ENCODE measurements at regions of chr10 and their contacts with region 1.

Region 1: DNA sequence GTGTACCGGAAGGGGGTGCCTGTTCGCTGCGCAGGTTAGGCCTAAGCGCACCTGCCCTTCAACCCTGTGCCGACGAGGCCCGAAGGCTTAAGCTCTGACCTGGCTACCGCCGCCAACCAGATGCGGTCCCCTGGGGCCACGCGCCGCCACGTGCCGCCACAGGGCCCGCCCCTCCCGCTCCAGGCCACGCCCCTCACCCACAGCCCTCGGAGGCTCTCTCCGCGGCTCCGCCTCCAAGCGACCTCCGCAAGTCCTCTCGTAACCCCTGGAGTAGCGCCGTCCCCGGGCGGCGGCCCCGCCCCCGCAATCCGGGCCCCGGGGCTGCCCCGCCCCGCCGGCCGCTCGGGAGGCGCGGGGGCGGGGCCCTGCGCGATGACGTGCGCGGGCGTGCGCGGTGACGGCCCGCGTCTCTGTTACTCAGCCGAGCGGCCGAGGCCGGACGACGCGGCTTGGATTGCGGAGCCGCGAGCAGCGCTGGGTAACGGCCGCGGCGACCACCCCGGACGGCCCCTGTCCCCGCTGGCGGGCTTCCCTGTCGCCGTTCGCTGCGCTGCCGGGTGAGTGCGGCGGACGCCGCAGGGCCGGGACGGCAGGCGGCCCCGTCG is at the start of gene MAPK8:
- DNase-seq: peak; percentile 92
- H3K4me3 Mint-ChIP-seq: peak within 1 kb of the TSS; percentile 84
- H3K27ac Mint-ChIP-seq: peak within 1 kb of the TSS; percentile 58
- H3K4me1 Mint-ChIP-seq: peaks cover 34% of the 10 kb centered on the region
- H3K27me3 Mint-ChIP-seq: no peaks in the 10 kb centered on the region
- total RNA-seq, gene MAPK8: 44.2 to 45.4 TPM

Region 2: DNA sequence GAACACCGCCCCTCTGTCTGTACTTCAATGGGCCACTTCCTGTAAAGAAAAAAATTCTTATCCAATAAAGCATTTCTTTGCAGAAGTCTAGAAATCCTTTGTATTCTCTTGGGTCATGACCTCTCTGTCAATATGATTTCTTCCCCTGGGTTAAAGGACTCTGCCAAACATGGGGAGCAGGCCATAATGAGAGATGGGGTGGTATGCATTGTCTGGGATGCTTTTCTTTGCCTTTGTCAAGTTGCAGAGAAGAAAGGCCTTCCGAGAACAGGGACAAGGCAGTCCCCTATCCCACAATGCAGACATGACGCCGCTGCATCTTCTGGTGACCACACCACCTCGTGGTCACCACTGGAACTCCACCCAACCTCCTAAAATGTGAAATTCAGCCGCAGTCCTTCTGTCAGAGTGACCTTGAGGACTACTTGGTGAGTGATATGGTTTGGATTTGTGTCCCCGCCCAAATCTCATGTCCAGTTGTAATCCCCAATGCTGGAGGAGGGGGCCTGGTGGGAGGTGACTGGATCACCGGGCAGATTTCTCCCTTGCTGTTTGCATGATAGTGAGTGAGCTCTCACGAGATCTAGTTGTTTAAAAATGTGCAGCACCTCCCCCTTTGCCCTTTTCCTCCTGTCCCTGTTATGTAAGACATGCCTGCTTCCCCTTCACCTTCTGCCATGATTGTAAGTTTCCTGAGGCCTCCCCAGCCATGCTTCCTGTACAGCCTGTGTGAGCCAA is 16.7 kb before region 1 on chr10:
- CTCF ChIA-PET with region 1: interaction called, 15 read pairs
- POLR2A ChIA-PET with region 1: no interaction called
- intact Hi-C with region 1: no loop called
- DNase-seq: peak; percentile 60
- H3K4me3 Mint-ChIP-seq: no peak overlapping the region
- H3K27ac Mint-ChIP-seq: no peak overlapping the region
- H3K4me1 Mint-ChIP-seq: peaks cover 7% of the 10 kb centered on the region
- H3K27me3 Mint-ChIP-seq: peaks cover 11% of the 10 kb centered on the region

Region 3: DNA sequence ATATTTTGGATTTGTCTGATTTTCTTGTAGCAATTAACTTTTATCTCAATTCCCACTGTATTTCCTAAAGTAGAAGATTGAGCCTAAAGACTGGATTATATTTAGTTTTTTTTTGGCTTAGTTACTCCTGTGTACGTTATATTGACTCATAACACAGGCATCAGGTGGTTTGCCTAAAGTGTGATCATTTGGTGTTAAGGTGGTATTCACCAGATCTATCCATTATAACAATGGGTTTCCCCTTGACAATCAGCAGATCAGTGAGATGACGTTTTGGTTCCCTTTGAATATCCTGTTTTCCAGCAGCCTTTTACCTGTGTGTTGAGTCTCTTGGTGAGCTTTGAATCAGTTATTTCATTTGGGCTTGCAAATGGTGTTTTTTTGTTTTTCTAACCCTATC is 18.2 kb after region 1 on chr10:
- CTCF ChIA-PET with region 1: no interaction called
- POLR2A ChIA-PET with region 1: no interaction called
- intact Hi-C with region 1: loop called (anchors 2 kb)
- DNase-seq: no peak
- H3K4me3 Mint-ChIP-seq: no peak overlapping the region
- H3K27ac Mint-ChIP-seq: no peak overlapping the region
- H3K4me1 Mint-ChIP-seq: peaks cover 37% of the 10 kb centered on the region
- H3K27me3 Mint-ChIP-seq: no peaks in the 10 kb centered on the region

Region 4: GRCh38 chr10:48331436-48331835 is 25.1 kb after region 1 on chr10:
- CTCF ChIA-PET with region 1: no interaction called
- POLR2A ChIA-PET with region 1: no interaction called
- intact Hi-C with region 1: loop called (anchors 1 kb)
- DNase-seq: peak; percentile 39
- H3K4me3 Mint-ChIP-seq: no peak overlapping the region
- H3K27ac Mint-ChIP-seq: no peak overlapping the region
- H3K4me1 Mint-ChIP-seq: peaks cover 24% of the 10 kb centered on the region
- H3K27me3 Mint-ChIP-seq: no peaks in the 10 kb centered on the region

Region 5: GRCh38 chr10:48390933-48391845 is 84.8 kb after region 1 on chr10:
- CTCF ChIA-PET with region 1: no interaction called
- POLR2A ChIA-PET with region 1: no interaction called
- intact Hi-C with region 1: loop called (anchors 5 kb)
- DNase-seq: peak; percentile 24
- H3K4me3 Mint-ChIP-seq: no peak overlapping the region
- H3K27ac Mint-ChIP-seq: no peak overlapping the region
- H3K4me1 Mint-ChIP-seq: peaks cover 51% of the 10 kb centered on the region
- H3K27me3 Mint-ChIP-seq: no peaks in the 10 kb centered on the region

Region 6: GRCh38 chr10:49538381-49539319 is 1232.3 kb after region 1 on chr10 and contains the start of gene ERCC6:
- CTCF ChIA-PET with region 1: no interaction called
- POLR2A ChIA-PET with region 1: no interaction called
- intact Hi-C with region 1: loop called (anchors 2 kb)
- DNase-seq: peak; percentile 98
- H3K4me3 Mint-ChIP-seq: peak within 1 kb of the TSS; percentile 89
- H3K27ac Mint-ChIP-seq: peak within 1 kb of the TSS; percentile 95
- H3K4me1 Mint-ChIP-seq: peaks cover 34% of the 10 kb centered on the region
- H3K27me3 Mint-ChIP-seq: peaks cover 24% of the 10 kb centered on the region
- total RNA-seq, gene ERCC6: 17.5 to 18.8 TPM

Measured in activated CD4-positive, alpha-beta memory T cell treated with anti-CD3 and anti-CD28 coated beads for 36 hours (primary cell).